ENCODE measurements at regions of chr3 and their contacts with region 1.

Region 1: DNA sequence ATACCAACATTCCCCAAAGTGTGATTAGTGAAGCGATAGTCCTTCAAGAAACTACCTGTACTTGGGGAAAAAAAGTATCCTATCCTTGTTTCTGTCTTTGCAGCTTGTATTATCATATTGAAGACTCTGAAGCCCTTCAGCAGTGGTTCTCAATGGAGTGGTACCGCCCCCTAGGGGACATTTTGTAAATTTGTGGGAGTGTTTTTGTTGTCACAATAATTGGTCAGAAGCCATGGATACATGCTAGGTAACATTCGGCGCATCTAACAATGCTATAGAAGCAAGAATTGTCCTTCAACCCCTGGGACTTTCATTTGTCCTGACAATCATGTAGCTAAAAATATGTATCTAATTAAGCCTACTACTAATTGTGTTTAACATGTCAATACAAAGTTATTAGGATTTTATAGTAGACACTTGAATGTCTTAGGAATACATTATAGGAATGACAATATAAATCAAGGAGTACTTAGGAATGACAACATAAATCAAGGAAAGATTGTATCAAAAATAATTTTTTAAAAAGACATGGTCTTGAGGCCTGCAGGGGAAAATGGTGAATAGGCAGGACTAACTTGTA is 53.7 kb downstream of the NMD3 start:
- DNase-seq: peak; percentile 40
- H3K4me3 Mint-ChIP-seq: no peak overlapping the region
- H3K27ac Mint-ChIP-seq: no peak overlapping the region
- H3K4me1 Mint-ChIP-seq: no peaks in the 10 kb centered on the region
- H3K27me3 Mint-ChIP-seq: no peaks in the 10 kb centered on the region

Region 2: DNA sequence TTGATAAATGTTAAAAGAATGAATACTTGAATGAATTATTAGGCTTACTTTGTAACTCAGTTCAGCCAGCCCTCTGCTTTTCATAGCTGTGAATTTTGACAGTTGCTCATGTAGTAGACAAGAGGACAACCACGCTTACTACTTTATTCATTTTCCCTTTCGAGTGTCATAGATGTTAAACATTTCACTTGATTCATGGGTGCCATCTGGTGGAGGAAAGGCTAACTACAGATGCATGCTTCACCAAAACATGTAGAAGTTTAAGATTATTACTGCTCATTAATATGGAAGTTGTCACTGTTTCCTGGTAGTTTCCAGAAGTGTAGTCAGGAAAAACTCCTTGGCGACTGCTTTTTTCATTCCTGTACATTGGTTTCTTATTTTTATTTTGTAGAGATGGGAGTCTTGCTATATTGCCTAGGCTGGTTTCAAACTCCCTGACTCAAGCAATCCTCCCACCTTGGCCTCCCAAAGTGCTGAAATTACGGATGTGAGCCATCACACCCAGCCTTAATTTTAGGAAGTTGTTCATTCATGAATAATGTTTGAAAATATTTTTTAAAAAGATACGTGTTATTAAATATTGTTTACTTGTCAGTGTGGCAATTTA is 332.8 kb before region 1 on chr3:
- CTCF ChIA-PET with region 1: no interaction called
- POLR2A ChIA-PET with region 1: no interaction called
- intact Hi-C with region 1: loop called (anchors 1 kb)
- DNase-seq: peak; percentile 70
- H3K4me3 Mint-ChIP-seq: no peak overlapping the region
- H3K27ac Mint-ChIP-seq: no peak overlapping the region
- H3K4me1 Mint-ChIP-seq: peaks cover 3% of the 10 kb centered on the region
- H3K27me3 Mint-ChIP-seq: no peaks in the 10 kb centered on the region

Region 3: DNA sequence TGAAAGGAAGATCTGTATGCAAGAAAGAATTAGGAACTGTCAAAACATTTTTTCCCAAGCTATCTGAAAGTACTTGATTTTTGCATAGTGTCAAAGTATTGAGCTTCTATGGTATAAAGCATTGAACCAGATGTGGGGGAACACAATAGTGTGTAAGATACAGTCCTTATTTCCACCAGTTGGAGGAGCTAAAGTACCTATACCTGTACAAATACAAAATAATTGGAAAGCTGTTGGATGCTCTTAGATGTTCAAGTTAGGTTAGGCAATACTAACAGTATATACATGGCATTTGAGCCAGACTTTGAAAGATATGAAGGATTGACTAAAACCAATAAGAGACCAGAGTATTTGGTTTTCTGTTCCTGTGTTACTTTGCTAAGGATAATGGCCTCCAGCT is 318.0 kb before region 1 on chr3:
- CTCF ChIA-PET with region 1: interaction called, 8 read pairs
- POLR2A ChIA-PET with region 1: no interaction called
- intact Hi-C with region 1: loop called (anchors 2 kb)
- DNase-seq: no peak
- H3K4me3 Mint-ChIP-seq: no peak overlapping the region
- H3K27ac Mint-ChIP-seq: no peak overlapping the region
- H3K4me1 Mint-ChIP-seq: no peaks in the 10 kb centered on the region
- H3K27me3 Mint-ChIP-seq: peaks cover 4% of the 10 kb centered on the region

Region 4: GRCh38 chr3:161096771-161097355 is 177.9 kb before region 1 on chr3:
- CTCF ChIA-PET with region 1: interaction called, 5 read pairs
- POLR2A ChIA-PET with region 1: no interaction called
- intact Hi-C with region 1: loop called (anchors 1 kb)
- DNase-seq: peak; percentile 27
- H3K4me3 Mint-ChIP-seq: no peak overlapping the region
- H3K27ac Mint-ChIP-seq: no peak overlapping the region
- H3K4me1 Mint-ChIP-seq: no peaks in the 10 kb centered on the region
- H3K27me3 Mint-ChIP-seq: peaks cover 2% of the 10 kb centered on the region

Region 5: DNA sequence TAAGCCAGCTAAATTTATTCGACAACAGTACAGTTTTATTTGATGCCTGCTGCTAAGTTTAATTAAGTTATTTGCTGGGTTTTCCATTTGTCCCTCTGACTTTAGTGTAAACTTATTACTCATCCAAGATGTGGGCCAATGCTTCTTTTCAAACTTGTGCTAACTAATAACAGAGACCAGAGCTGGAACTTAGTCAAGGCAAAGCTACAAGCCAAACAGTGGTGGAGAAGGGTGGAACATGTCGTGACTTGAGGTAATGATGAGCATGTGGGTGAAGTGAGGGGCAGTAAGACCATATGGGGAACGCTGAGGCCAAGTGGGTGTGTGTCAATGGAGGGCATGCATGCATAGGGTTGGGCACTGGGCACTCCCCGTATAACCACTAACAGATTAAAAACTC is 10.2 kb after region 1 on chr3:
- CTCF ChIA-PET with region 1: interaction called, 14 read pairs
- POLR2A ChIA-PET with region 1: no interaction called
- intact Hi-C with region 1: no loop called
- DNase-seq: no peak
- H3K4me3 Mint-ChIP-seq: no peak overlapping the region
- H3K27ac Mint-ChIP-seq: no peak overlapping the region
- H3K4me1 Mint-ChIP-seq: no peaks in the 10 kb centered on the region
- H3K27me3 Mint-ChIP-seq: no peaks in the 10 kb centered on the region

Region 6: DNA sequence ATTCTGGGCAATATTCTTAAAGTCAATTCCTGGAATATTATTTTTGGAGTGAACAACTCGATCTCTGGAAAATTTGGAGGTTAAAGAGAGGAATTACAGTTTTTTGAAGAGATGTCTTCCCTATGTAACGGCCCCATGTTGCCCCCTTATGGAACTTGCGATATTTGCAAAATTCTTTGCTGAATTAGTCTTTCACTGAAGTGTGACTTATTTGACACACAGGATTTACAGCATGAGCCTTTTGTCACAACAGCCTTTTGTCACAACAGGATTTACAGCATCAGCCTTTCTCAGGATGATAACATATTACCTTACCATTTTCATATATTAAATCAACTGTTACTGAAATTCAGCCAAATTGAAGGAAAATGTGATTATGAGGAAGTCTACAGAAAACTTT is 134.3 kb after region 1 on chr3:
- CTCF ChIA-PET with region 1: interaction called, 19 read pairs
- POLR2A ChIA-PET with region 1: no interaction called
- intact Hi-C with region 1: loop called (anchors 1 kb)
- DNase-seq: peak; percentile 23
- H3K4me3 Mint-ChIP-seq: no peak overlapping the region
- H3K27ac Mint-ChIP-seq: no peak overlapping the region
- H3K4me1 Mint-ChIP-seq: peaks cover 18% of the 10 kb centered on the region
- H3K27me3 Mint-ChIP-seq: peaks cover 5% of the 10 kb centered on the region

Region 7: GRCh38 chr3:161423911-161424522 is 149.2 kb after region 1 on chr3:
- CTCF ChIA-PET with region 1: interaction called, 14 read pairs
- POLR2A ChIA-PET with region 1: no interaction called
- intact Hi-C with region 1: loop called (anchors 1 kb)
- DNase-seq: no peak
- H3K4me3 Mint-ChIP-seq: no peak overlapping the region
- H3K27ac Mint-ChIP-seq: no peak overlapping the region
- H3K4me1 Mint-ChIP-seq: peaks cover 12% of the 10 kb centered on the region
- H3K27me3 Mint-ChIP-seq: no peaks in the 10 kb centered on the region

Measured in activated CD4-positive, alpha-beta memory T cell treated with anti-CD3 and anti-CD28 coated beads for 36 hours (primary cell).